ENCODE measurements at regions of chr17 and their contacts with region 1.

Region 1: DNA sequence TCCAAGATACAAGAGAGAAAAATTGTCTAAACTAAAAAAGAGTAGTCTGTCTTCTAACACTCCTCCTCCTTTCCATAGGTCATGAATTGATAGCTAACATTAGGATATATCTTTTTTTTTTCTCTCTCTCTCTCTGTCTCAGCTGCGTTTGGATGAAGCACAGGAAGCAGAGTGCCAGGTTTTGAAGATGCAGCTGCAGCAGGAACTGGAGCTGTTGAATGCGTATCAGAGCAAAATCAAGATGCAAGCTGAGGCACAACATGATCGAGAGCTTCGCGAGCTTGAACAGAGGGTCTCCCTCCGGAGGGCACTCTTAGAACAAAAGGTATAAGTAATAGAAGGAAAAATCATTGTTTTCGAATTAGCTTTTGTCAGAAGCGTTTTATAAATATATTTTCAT is 32.9 kb downstream of the ABHD15 start:
- DNase-seq: no peak
- ATAC-seq: no peak
- H3K4me3 ChIP-seq: no peak overlapping the region
- H3K27ac ChIP-seq: no peak overlapping the region
- H3K4me1 ChIP-seq: no peaks in the 10 kb centered on the region
- H3K27me3 ChIP-seq: no peaks in the 10 kb centered on the region
- CTCF ChIP-seq: no peak
- POLR2A ChIP-seq: no peak
- RAD21 ChIP-seq: no peak

Region 2: GRCh38 chr17:29546085-29546484 is 12.1 kb after region 1 on chr17:
- CTCF ChIA-PET with region 1: interaction called, 12 read pairs
- POLR2A ChIA-PET with region 1: no interaction called
- RAD21 ChIA-PET with region 1: no interaction called
- intact Hi-C with region 1: no loop called
- DNase-seq: no peak
- ATAC-seq: no peak
- H3K4me3 ChIP-seq: no peak overlapping the region
- H3K27ac ChIP-seq: no peak overlapping the region
- H3K4me1 ChIP-seq: no peaks in the 10 kb centered on the region
- H3K27me3 ChIP-seq: no peaks in the 10 kb centered on the region
- CTCF ChIP-seq: no peak
- POLR2A ChIP-seq: no peak
- RAD21 ChIP-seq: no peak

Region 3: DNA sequence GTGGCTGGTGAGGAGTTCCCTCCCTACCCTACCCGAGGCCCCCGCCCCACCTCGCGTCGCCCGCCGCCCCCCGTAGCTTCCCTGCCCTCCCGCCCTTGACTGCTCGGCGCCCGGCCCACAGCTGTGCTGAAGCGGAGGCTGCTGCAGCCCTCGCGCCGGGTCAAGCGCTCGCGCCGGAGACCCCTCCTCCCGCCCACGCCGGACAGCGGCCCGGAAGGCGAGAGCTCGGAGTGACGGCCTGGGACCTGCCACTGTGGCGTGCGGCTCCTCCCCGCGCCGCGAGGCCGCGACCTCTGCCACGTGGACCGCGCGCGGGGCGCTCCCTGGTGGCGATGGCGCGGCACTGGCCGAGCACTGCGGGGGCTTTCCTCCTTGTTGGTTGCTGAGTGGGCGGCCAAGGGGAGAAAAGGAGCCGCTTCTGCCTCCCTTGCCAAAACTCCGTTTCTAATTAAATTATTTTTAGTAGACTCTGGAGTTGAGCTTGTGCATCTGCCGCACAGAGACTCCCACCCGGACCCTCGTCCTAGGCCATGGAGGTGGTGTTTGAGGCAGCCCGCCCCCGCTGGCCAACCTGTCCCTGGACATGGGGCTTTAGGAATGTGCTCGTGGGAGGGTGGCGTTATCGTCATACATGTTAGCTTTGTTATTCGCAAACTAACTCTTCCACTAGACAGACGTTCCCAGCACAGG is 38.9 kb after region 1 on chr17:
- CTCF ChIA-PET with region 1: no interaction called
- POLR2A ChIA-PET with region 1: no interaction called
- RAD21 ChIA-PET with region 1: no interaction called
- intact Hi-C with region 1: no loop called
- DNase-seq: no peak
- ATAC-seq: peak; percentile 49
- H3K4me3 ChIP-seq: no peak overlapping the region
- H3K27ac ChIP-seq: no peak overlapping the region
- H3K4me1 ChIP-seq: peaks cover 3 to 11% of the 10 kb centered on the region in 2 experiments; a peak in 2 of 4 replicates
- H3K27me3 ChIP-seq: no peaks in the 10 kb centered on the region
- CTCF ChIP-seq: peak; percentile 37 to 57 (median 54); a peak in 5 of 6 replicates
- POLR2A ChIP-seq: no peak
- RAD21 ChIP-seq: peak; percentile 44; the same call in 1 of the 2 replicates

Measured in HCT116 (cell line).